AG04450 (cell line): ENCODE measurements at regions of chr2 and their contacts with region 1.

Region 1: DNA sequence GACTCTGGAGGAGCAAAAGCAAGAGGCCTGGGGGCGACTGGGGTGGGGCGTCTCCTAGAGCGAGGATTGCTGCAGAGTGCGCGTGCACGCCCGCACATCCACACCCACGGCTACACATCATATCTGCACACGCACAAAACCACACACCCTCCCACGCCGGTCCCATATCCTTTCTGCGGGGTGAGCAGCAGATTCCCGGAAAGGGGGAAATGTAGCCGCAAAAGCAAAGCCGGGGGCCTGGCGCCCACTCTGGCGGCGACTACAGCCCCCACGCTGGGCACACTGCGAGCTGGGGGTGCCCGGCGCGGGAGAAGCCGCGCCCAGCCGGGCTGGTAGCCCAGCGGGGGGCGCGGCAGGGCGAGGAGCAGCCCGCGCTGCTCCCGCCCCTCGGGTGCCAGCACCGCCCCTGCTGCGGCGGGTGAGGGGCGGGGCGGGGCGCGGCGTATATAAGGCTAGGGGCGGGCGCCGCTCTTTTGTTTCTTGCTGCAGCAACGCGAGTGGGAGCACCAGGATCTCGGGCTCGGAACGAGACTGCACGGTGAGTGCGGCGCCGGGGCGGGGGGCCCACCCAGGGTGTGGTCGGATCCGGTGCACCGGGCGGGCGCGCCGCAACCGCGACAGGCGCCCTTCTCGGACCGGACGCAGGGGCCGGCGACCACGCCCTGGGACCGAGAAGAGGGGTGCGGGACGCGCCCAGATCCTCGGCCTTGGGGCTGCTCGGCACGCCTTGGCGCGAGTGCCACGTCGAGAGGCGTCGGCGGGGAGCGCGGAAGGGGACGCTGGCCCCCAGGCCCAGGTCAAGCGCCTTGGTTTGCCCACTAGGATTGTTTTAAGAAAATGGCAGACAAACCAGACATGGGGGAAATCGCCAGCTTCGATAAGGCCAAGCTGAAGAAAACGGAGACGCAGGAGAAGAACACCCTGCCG is at the start of gene TMSB10:
- DNase-seq: no peak
- H3K4me3 ChIP-seq: peak within 1 kb of the TSS; percentile 98
- H3K27ac ChIP-seq: peak within 1 kb of the TSS; percentile 80
- H3K27me3 ChIP-seq: no peaks in the 10 kb centered on the region
- CTCF ChIP-seq: no peak
- polyA plus RNA-seq, gene TMSB10: 4,621 and 5,651 TPM in 2 replicates

Region 2: GRCh38 chr2:84881581-84882414 is 23.6 kb before region 1 on chr2:
- CTCF ChIA-PET with region 1: interaction called, 5 read pairs
- POLR2A ChIA-PET with region 1: interaction called, 20 read pairs
- DNase-seq: peak; percentile 66
- H3K4me3 ChIP-seq: peak overlapping the region; percentile 76
- H3K27ac ChIP-seq: peak overlapping the region; percentile 58
- H3K27me3 ChIP-seq: no peaks in the 10 kb centered on the region
- CTCF ChIP-seq: peak; percentile 84

Region 3: GRCh38 chr2:84888401-84889276 is 16.8 kb before region 1 on chr2:
- CTCF ChIA-PET with region 1: no interaction called
- POLR2A ChIA-PET with region 1: interaction called, 16 read pairs
- DNase-seq: no peak
- H3K4me3 ChIP-seq: peak overlapping the region; percentile 34
- H3K27ac ChIP-seq: peak overlapping the region; percentile 97
- H3K27me3 ChIP-seq: no peaks in the 10 kb centered on the region
- CTCF ChIP-seq: no peak

Region 4: DNA sequence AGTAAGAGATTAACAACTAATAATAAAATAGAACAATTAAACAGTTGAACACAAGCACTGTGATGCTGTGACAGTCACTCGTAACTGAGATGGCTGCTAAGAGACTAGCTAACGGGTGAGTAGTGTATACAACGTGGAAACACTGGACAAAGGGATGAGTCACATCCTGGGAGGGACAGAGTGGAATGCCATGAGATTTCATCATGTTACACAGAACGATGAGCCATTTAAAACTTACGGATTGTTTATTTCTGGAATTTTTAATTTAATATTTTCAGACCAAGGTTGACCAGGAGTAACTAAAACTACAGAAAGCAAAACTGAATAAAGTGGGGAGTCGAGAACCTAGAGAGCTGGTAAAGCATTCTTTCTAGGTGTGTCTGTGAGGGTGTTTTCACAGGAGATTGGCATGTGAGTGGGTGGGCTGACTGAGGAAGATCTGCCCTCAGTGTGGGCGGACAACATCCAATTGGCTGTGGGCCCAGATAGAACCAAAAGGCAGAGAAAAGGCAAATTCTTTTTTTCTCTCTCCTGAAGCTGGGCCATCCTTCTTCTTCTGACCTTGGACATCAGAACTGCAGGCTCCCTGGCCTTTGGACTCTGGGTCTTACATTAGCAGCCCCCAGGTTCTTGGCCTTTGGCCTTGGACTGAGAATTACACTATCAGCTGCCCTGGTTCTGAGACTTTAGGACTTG is 14.6 kb after region 1 on chr2:
- CTCF ChIA-PET with region 1: interaction called, 19 read pairs
- POLR2A ChIA-PET with region 1: interaction called, 45 read pairs
- DNase-seq: peak; percentile 93
- H3K4me3 ChIP-seq: peak overlapping the region; percentile 27; the same call in 1 of the 2 replicates
- H3K27ac ChIP-seq: peak overlapping the region; percentile 99
- H3K27me3 ChIP-seq: no peaks in the 10 kb centered on the region
- CTCF ChIP-seq: no peak

Region 5: DNA sequence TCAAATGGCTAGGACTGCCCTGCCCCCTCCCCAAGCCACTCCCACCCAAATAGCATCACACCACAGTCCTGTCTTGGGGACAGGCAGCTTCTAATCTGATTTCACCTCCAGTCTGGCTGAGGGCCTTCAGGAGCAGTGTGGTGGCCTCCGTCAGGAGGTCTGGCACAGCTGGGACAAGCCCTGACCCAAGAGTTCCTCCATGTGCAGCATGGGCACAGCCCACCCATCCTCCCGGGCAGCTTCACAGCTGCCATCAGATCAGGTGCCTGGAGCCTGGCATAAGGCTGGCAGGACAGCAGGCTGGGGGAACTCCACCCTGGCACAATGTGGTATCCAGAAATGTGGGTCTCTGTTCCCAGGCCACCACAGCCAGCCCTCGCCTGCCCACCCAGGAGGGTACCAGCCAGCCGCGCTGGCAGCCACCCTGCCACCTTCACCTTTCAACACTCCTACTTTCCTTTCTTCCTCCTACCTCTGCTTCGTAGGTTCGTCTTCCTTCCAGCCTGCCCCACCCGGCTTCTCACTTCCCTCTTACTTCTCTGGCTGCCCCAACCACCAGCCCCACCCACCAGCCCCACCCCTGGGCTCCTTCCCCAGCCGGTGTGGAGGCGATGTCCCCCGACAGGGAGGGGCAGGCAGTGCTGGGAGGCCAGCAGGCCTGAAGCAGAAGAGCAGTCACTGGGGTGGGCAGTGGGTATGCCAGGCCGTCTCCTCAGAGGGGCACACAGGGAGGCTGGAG is 504.6 kb after region 1 on chr2 and contains the start of gene CAPG:
- CTCF ChIA-PET with region 1: no interaction called
- POLR2A ChIA-PET with region 1: no interaction called
- DNase-seq: no peak
- H3K4me3 ChIP-seq: no peak within 1 kb of the TSS
- H3K27ac ChIP-seq: no peak within 1 kb of the TSS
- H3K27me3 ChIP-seq: no peaks in the 10 kb centered on the region
- CTCF ChIP-seq: no peak
- polyA plus RNA-seq, gene CAPG: 70.5 and 97.8 TPM in 2 replicates